Activated T-helper 1 cell treated with anti-CD3 and anti-CD28 coated beads, Interleukin-12 subunit alpha, Interleukin-12 subunit beta, Interleukin-2, Interleukin-4 antibody, amounts not matched to agents 30 ng/mL and 10 ng/mL and 1 ng/mL, durations not matched to agents 14 hours and 24 hours and 36 hours (primary cell): ENCODE measurements at regions of chr13 and their contacts with region 1.

Region 1: DNA sequence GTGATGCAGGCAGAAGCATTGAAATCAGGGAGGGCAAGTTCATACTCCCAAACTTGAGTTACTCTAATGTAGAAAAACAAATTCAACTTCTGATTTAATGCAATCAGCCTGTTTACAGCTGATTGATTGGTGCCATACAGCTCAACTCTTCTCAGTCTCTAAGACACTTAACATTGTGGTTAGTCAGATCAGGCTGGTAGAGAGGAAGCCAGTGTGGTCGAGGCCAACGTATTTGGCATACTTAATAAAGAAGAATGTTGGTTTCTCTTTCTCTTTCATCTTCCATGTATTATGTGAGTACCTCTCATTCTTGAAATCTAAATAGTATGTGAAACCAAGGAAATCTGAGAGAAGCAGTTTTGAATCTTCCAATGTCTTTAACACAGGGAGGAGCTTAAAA is 255.0 kb upstream of the SLITRK1 start:
- DNase-seq: peak; percentile 56
- H3K4me3 Mint-ChIP-seq: peak overlapping the region; percentile 60
- H3K27ac Mint-ChIP-seq: peak overlapping the region; percentile 37
- H3K4me1 Mint-ChIP-seq: peaks cover 19% of the 10 kb centered on the region
- H3K27me3 Mint-ChIP-seq: no peaks in the 10 kb centered on the region

Region 2: GRCh38 chr13:83876546-83876945 is 260.7 kb before region 1 on chr13:
- intact Hi-C with region 1: loop called (anchors 5 kb)
- DNase-seq: no peak
- H3K4me3 Mint-ChIP-seq: no peak overlapping the region
- H3K27ac Mint-ChIP-seq: no peak overlapping the region
- H3K4me1 Mint-ChIP-seq: peaks cover 19% of the 10 kb centered on the region
- H3K27me3 Mint-ChIP-seq: peaks cover 29% of the 10 kb centered on the region

Region 3: DNA sequence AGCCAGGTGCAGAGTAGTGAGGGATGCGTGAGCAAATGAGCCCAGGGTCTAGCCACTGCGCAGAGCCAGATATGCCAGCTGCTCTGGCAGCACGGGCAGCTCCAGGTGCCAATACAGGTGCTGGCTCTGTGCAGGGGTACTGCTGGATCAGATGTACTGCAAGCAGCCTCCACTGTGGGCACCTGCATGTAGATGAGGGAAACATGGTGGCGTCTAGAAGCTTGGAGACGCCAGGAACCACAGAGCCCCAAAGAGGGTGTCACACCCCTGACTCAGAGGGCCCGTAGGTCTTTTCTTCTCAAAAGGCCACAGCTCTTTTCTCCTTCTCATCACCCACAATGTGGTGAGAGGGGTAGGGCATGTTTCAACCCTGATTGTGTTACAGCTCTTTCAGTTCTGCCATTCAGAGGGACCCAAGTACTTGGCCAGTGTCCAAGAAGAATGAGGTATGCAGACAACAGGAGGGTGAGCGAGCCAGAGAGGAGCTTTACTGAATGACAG is 10.6 kb before region 1 on chr13:
- intact Hi-C with region 1: no loop called
- DNase-seq: no peak
- H3K4me3 Mint-ChIP-seq: no peak overlapping the region
- H3K27ac Mint-ChIP-seq: no peak overlapping the region
- H3K4me1 Mint-ChIP-seq: no peaks in the 10 kb centered on the region
- H3K27me3 Mint-ChIP-seq: no peaks in the 10 kb centered on the region